Gastrocnemius medialis (tissue), 4 donors: ENCODE measurements at regions of chr2 and their contacts with region 1.

Region 1: GRCh38 chr2:25342372-25343186 is 854 bp upstream of the DNMT3A start:
- DNase-seq: peak; percentile 76 to 86
- ATAC-seq: peak; percentile 51 to 67
- H3K4me3 ChIP-seq: peak overlapping the region; percentile 47 to 72 (median 68)
- H3K27ac ChIP-seq: peak overlapping the region; percentile 83 to 90 (median 86)
- H3K4me1 ChIP-seq: peaks cover 24 to 32% of the 10 kb centered on the region in 2 donors
- H3K27me3 ChIP-seq: no peaks in the 10 kb centered on the region
- CTCF ChIP-seq: peak; percentile 98 to 100 (median 99)
- POLR2A ChIP-seq: peak; percentile 82 to 87

Region 2: GRCh38 chr2:24971536-24972314 is 370.9 kb before region 1 on chr2 and contains the start of gene DNAJC27:
- in situ Hi-C with region 1: no loop called
- intact Hi-C with region 1: loop called (anchors 10 kb)
- DNase-seq: peak; percentile 97
- ATAC-seq: peak; percentile 86 to 89
- H3K4me3 ChIP-seq: peak within 1 kb of the TSS; percentile 73 to 95 (median 88)
- H3K27ac ChIP-seq: peak within 1 kb of the TSS; percentile 96 to 100 (median 98)
- H3K4me1 ChIP-seq: peaks cover 9 to 22% of the 10 kb centered on the region in 2 donors
- H3K27me3 ChIP-seq: no peaks in the 10 kb centered on the region
- CTCF ChIP-seq: no peak
- POLR2A ChIP-seq: peak; percentile 88 to 96
- total RNA-seq, gene DNAJC27: 3.0 to 11.0 (median 4.9) TPM

Region 3: GRCh38 chr2:25276569-25277465 is 65.8 kb before region 1 on chr2:
- in situ Hi-C with region 1: no loop called
- intact Hi-C with region 1: loop called (anchors 1 kb)
- DNase-seq: peak in 1 of 2 donors; percentile 50
- ATAC-seq: peak; percentile 37 to 40
- H3K4me3 ChIP-seq: peak overlapping the region; percentile 38 to 59 (median 46)
- H3K27ac ChIP-seq: peak overlapping the region; percentile 80 to 87 (median 84)
- H3K4me1 ChIP-seq: peaks cover 12 to 50% of the 10 kb centered on the region in 2 donors
- H3K27me3 ChIP-seq: no peaks in the 10 kb centered on the region
- CTCF ChIP-seq: peak; percentile 60 to 86 (median 80)
- POLR2A ChIP-seq: no peak

Region 4: DNA sequence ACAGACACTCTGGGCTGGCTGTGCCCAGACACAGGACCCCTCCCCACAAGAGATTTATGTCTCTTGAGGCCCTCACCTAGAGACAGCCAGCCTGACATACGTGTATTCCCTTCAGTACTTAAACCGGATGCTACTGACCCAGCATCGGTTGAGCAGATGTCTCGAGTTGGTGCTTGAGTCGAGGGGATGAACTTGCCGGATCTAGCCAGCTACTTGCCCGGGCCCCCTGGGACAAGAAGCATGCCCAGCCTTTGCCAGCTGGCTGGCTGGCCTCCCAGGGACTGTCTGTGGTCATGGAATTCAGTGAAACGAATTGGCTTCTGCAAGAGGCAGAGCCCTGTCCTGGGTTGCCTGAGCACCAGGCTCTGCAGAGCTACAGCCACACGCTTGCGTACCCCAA is 36.8 kb before region 1 on chr2:
- in situ Hi-C with region 1: no loop called
- intact Hi-C with region 1: loop called (anchors 2 kb)
- DNase-seq: peak in 1 of 2 donors; percentile 52
- ATAC-seq: no peak
- H3K4me3 ChIP-seq: no peak overlapping the region
- H3K27ac ChIP-seq: peak overlapping the region; percentile 56 to 84 (median 75)
- H3K4me1 ChIP-seq: peaks cover 91 to 92% of the 10 kb centered on the region in 2 donors
- H3K27me3 ChIP-seq: no peaks in the 10 kb centered on the region
- CTCF ChIP-seq: no peak
- POLR2A ChIP-seq: no peak

Region 5: DNA sequence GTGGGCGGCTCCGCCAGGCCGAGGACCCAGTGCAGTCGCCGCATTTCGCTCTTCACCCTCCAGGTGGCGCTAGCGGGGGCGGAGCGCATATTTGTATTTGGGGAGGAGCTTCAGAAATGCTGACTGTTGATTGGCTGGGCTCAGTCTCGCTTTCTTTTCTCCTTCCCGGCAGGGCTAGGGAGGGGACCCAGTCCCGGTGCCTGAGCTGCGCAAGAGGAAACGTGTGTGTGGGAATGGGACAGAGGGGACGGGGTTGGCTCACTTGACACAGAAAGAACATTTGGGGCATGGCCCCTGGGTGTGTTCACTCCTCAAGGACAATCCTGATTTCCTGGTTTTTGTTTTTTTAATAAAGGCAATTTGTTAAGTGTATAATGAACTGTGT is 19.5 kb after region 1 on chr2:
- in situ Hi-C with region 1: no loop called
- intact Hi-C with region 1: loop called (anchors 1 kb)
- DNase-seq: peak; percentile 85 to 88
- ATAC-seq: peak; percentile 99 to 100
- H3K4me3 ChIP-seq: peak overlapping the region; percentile 35 to 55 (median 50)
- H3K27ac ChIP-seq: peak overlapping the region; percentile 50 to 73 (median 68)
- H3K4me1 ChIP-seq: peaks cover 6 to 7% of the 10 kb centered on the region in 2 donors
- H3K27me3 ChIP-seq: no peaks in the 10 kb centered on the region
- CTCF ChIP-seq: peak; percentile 79 to 99 (median 94)
- POLR2A ChIP-seq: peak; percentile 53 to 67

Region 6: GRCh38 chr2:25376750-25377621 is 34.4 kb after region 1 on chr2:
- in situ Hi-C with region 1: no loop called
- intact Hi-C with region 1: loop called (anchors 1 kb)
- DNase-seq: peak; percentile 77 to 87
- ATAC-seq: peak; percentile 69 to 74
- H3K4me3 ChIP-seq: peak overlapping the region in 3 of 4 donors; percentile 34 to 53 (median 35)
- H3K27ac ChIP-seq: peak overlapping the region; percentile 38 to 53 (median 40)
- H3K4me1 ChIP-seq: peaks cover 41 to 43% of the 10 kb centered on the region in 2 donors
- H3K27me3 ChIP-seq: no peaks in the 10 kb centered on the region
- CTCF ChIP-seq: peak; percentile 89 to 97 (median 96)
- POLR2A ChIP-seq: no peak

Region 7: GRCh38 chr2:25521665-25522387 is 179.2 kb after region 1 on chr2:
- in situ Hi-C with region 1: loop called in 1 of 4 experiments (anchors 5 kb)
- intact Hi-C with region 1: loop called (anchors 1 kb)
- DNase-seq: no peak
- ATAC-seq: peak; percentile 62 to 74
- H3K4me3 ChIP-seq: peak overlapping the region; percentile 11 to 38 (median 24)
- H3K27ac ChIP-seq: no peak overlapping the region
- H3K4me1 ChIP-seq: peaks cover 0 to 7% of the 10 kb centered on the region in 2 donors
- H3K27me3 ChIP-seq: no peaks in the 10 kb centered on the region
- CTCF ChIP-seq: peak; percentile 58 to 75 (median 69)
- POLR2A ChIP-seq: no peak